GM12878 (cell line): ENCODE measurements at regions of chr20 and their contacts with region 1.

Region 1: GRCh38 chr20:12925214-12925755 is 83.5 kb upstream of the SPTLC3 start:
- DNase-seq: peak; percentile 13
- ATAC-seq: peak; percentile 98
- H3K4me3 ChIP-seq: no peak overlapping the region
- H3K27ac ChIP-seq: no peak overlapping the region
- H3K4me1 ChIP-seq: no peaks in the 10 kb centered on the region
- H3K27me3 ChIP-seq: no peaks in the 10 kb centered on the region; a peak in 1 of 4 replicates
- CTCF ChIP-seq: peak; percentile 74 to 94 (median 84); a peak in 5 of 6 replicates
- EP300 ChIP-seq: no peak
- POLR2A ChIP-seq: no peak
- RAD21 ChIP-seq: peak; percentile 86

Region 2: GRCh38 chr20:12936036-12936435 is 10.8 kb after region 1 on chr20:
- CTCF ChIA-PET with region 1: interaction called, 16 read pairs
- POLR2A ChIA-PET with region 1: no interaction called
- RAD21 ChIA-PET with region 1: no interaction called
- SMC1A ChIA-PET with region 1: interaction called, 3 read pairs
- in situ Hi-C with region 1: no loop called
- intact Hi-C with region 1: no loop called
- DNase-seq: no peak
- ATAC-seq: peak; percentile 34; the same call in 1 of the 3 replicates
- H3K4me3 ChIP-seq: no peak overlapping the region
- H3K27ac ChIP-seq: no peak overlapping the region
- H3K4me1 ChIP-seq: no peaks in the 10 kb centered on the region
- H3K27me3 ChIP-seq: no peaks in the 10 kb centered on the region
- CTCF ChIP-seq: no peak
- EP300 ChIP-seq: no peak
- POLR2A ChIP-seq: no peak
- RAD21 ChIP-seq: no peak

Region 3: GRCh38 chr20:13105864-13106457 is 180.7 kb after region 1 on chr20:
- CTCF ChIA-PET with region 1: interaction called, 50 read pairs
- POLR2A ChIA-PET with region 1: no interaction called
- RAD21 ChIA-PET with region 1: interaction called, 5 read pairs
- SMC1A ChIA-PET with region 1: interaction called, 11 read pairs
- in situ Hi-C with region 1: loop called (anchors 5 kb)
- intact Hi-C with region 1: loop called (anchors 1 kb)
- DNase-seq: no peak
- ATAC-seq: peak; percentile 65
- H3K4me3 ChIP-seq: no peak overlapping the region
- H3K27ac ChIP-seq: no peak overlapping the region
- H3K4me1 ChIP-seq: no peaks in the 10 kb centered on the region
- H3K27me3 ChIP-seq: no peaks in the 10 kb centered on the region; a peak in 2 of 4 replicates
- CTCF ChIP-seq: peak; percentile 52 to 64 (median 52)
- EP300 ChIP-seq: no peak
- POLR2A ChIP-seq: no peak
- RAD21 ChIP-seq: peak; percentile 83

Region 4: GRCh38 chr20:13261460-13262301 is 336.4 kb after region 1 on chr20:
- CTCF ChIA-PET with region 1: interaction called, 4 read pairs
- POLR2A ChIA-PET with region 1: no interaction called
- RAD21 ChIA-PET with region 1: no interaction called
- SMC1A ChIA-PET with region 1: no interaction called
- in situ Hi-C with region 1: no loop called
- intact Hi-C with region 1: loop called (anchors 1 kb)
- DNase-seq: no peak
- ATAC-seq: peak; percentile 94
- H3K4me3 ChIP-seq: no peak overlapping the region
- H3K27ac ChIP-seq: no peak overlapping the region
- H3K4me1 ChIP-seq: no peaks in the 10 kb centered on the region
- H3K27me3 ChIP-seq: no peaks in the 10 kb centered on the region
- CTCF ChIP-seq: peak; percentile 54 to 76 (median 75)
- EP300 ChIP-seq: no peak
- POLR2A ChIP-seq: no peak
- RAD21 ChIP-seq: peak; percentile 71

Region 5: DNA sequence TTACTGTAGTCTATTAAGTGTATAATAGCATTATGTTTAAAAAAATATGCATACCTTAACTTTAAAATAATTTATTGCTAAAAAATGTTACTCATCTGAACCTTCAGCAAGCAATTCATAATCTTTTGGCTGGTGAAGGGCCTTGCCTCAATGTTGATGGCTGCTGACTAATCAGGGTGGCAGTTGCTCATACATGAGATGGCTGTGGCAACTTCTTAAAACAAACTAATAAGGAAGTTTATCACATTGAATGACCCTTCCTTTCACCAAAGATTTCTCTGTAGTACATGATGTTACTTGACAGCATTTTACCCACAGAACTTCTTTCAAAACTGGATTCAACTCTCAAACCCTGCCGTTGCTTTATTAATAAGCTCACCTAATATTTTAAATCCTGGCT is 629.4 kb after region 1 on chr20:
- CTCF ChIA-PET with region 1: interaction called, 3 read pairs
- POLR2A ChIA-PET with region 1: no interaction called
- RAD21 ChIA-PET with region 1: no interaction called
- SMC1A ChIA-PET with region 1: no interaction called
- in situ Hi-C with region 1: loop called (anchors 25 kb)
- intact Hi-C with region 1: no loop called
- DNase-seq: no peak
- ATAC-seq: no peak
- H3K4me3 ChIP-seq: no peak overlapping the region
- H3K27ac ChIP-seq: no peak overlapping the region
- H3K4me1 ChIP-seq: no peaks in the 10 kb centered on the region
- H3K27me3 ChIP-seq: no peaks in the 10 kb centered on the region
- CTCF ChIP-seq: no peak
- EP300 ChIP-seq: no peak
- POLR2A ChIP-seq: no peak
- RAD21 ChIP-seq: no peak

Region 6: DNA sequence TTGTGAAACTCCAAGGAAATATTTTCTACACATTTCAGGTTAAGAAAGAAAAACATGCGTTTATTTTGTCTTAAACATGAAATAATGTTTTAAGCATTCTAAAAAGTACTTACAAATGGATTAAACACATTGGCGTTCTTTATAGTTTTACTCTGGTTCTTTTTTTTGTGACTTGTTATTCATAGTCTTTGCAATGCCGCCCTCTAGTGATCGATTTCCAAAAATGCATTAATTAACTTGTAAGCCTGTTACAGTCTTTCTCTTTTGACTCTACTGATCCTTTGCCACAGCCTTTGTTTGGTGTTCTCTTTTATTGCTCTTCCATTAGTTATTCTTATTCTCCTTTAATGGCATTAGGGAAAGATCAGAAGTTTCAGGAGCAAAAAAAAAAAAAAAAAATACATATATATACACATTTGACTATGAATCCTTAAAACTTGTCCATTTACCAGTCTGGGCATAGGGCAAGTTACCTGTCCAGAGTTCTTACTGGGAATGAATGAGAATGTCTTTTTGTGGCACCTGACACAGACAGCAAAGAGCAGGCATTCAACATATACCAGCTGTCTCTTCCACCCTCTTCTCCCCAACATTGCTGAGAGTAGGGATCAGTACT is 1130.0 kb after region 1 on chr20:
- CTCF ChIA-PET with region 1: no interaction called
- POLR2A ChIA-PET with region 1: no interaction called
- RAD21 ChIA-PET with region 1: no interaction called
- SMC1A ChIA-PET with region 1: no interaction called
- in situ Hi-C with region 1: no loop called
- intact Hi-C with region 1: loop called (anchors 10 kb)
- DNase-seq: no peak
- ATAC-seq: peak; percentile 55
- H3K4me3 ChIP-seq: no peak overlapping the region
- H3K27ac ChIP-seq: no peak overlapping the region
- H3K4me1 ChIP-seq: no peaks in the 10 kb centered on the region
- H3K27me3 ChIP-seq: no peaks in the 10 kb centered on the region
- CTCF ChIP-seq: peak; percentile 47 to 71 (median 59)
- EP300 ChIP-seq: no peak
- POLR2A ChIP-seq: no peak
- RAD21 ChIP-seq: peak; percentile 77